ENCODE measurements at regions of chr7 and their contacts with region 1.

Region 1: GRCh38 chr7:47482013-47482875 is 99.7 kb downstream of the TNS3 start:
- DNase-seq: peak; percentile 98
- ATAC-seq: peak; percentile 69
- H3K4me3 ChIP-seq: no peak overlapping the region
- H3K27ac ChIP-seq: peak overlapping the region; percentile 84
- H3K4me1 ChIP-seq: peaks cover 55% of the 10 kb centered on the region
- H3K27me3 ChIP-seq: no peaks in the 10 kb centered on the region
- CTCF ChIP-seq: no peak
- POLR2A ChIP-seq: peak; percentile 12
- RAD21 ChIP-seq: peak; percentile 33; the same call in 1 of the 2 replicates

Region 2: DNA sequence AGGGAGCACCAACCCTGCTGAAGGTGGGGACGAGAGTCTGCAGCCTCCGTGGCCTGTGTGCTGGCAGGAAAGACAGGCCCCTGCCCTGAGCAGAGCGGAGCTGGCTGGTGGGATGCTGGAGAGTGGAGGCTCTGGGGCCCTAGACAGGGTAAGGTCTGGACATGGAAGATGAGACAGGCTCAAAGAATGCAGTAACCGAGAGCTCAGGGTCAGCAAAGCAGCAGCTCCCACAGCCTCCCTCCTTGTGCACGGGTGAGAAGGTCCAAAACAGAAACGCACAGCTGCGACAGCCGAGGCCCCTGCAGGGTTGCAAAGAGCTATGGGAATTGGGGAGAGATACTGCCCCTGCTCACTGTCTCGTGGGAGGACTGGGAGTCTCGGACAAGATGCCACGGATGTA is 19.2 kb after region 1 on chr7:
- CTCF ChIA-PET with region 1: no interaction called
- POLR2A ChIA-PET with region 1: interaction called, 3 read pairs
- dilution Hi-C with region 1: no loop called
- in situ Hi-C with region 1: no loop called
- intact Hi-C with region 1: loop called (anchors 2 kb)
- DNase-seq: peak; percentile 96
- ATAC-seq: peak; percentile 94
- H3K4me3 ChIP-seq: no peak overlapping the region
- H3K27ac ChIP-seq: peak overlapping the region; percentile 96
- H3K4me1 ChIP-seq: peaks cover 49% of the 10 kb centered on the region
- H3K27me3 ChIP-seq: no peaks in the 10 kb centered on the region
- CTCF ChIP-seq: no peak
- POLR2A ChIP-seq: peak; percentile 40
- RAD21 ChIP-seq: no peak; the same call in 1 of the 2 replicates

Region 3: DNA sequence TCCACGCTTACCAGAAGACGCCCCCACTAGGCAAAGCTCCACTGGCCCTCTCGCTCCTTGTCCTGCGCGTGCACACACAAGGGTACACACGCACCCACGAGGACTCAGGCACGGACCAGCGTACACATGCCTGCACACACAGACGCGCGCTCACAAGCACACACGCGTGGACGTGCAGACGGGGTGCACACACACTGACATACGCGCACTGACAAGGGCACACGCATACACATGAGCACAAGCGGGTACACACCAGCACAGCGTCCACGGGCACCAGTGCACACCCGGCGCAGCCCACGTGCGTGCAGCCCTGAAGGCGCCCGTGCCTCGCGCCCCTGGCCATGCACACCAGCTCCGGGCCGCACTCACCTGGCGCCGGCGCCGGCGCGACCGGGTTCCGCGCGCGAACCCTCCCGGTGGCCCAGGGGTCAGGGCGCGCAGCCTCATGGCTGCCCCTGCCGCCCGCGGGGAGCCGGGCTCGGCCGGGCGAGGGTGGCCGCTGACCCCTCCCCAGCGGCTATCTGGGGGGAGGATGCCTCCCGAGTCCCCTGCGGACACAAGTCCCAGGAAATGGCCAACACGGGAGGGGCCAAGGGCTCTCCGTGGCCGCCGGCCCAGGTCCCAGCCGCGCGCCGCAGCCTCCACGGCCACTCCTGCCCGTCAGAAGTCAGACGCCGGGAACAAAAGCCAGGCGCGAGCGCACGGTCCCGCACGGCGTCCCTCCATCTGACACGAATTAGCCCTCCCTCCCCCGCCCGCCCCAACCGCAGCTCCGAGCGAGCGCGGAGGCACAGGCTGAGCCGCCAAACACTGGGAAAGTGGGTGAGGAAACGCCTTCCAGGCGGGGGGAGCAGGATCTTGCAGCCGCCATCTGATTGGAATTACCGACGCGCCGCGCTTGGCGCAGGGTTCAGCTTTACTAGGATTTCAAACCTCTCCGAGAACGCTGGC is 54.7 kb after region 1 on chr7:
- CTCF ChIA-PET with region 1: no interaction called
- POLR2A ChIA-PET with region 1: no interaction called
- dilution Hi-C with region 1: no loop called
- in situ Hi-C with region 1: no loop called
- intact Hi-C with region 1: loop called (anchors 1 kb)
- DNase-seq: peak; percentile 76
- ATAC-seq: peak; percentile 46
- H3K4me3 ChIP-seq: peak overlapping the region; percentile 11
- H3K27ac ChIP-seq: peak overlapping the region; percentile 15; the same call in 1 of the 2 replicates
- H3K4me1 ChIP-seq: peaks cover 39% of the 10 kb centered on the region
- H3K27me3 ChIP-seq: no peaks in the 10 kb centered on the region
- CTCF ChIP-seq: no peak
- POLR2A ChIP-seq: no peak
- RAD21 ChIP-seq: no peak

Region 4: DNA sequence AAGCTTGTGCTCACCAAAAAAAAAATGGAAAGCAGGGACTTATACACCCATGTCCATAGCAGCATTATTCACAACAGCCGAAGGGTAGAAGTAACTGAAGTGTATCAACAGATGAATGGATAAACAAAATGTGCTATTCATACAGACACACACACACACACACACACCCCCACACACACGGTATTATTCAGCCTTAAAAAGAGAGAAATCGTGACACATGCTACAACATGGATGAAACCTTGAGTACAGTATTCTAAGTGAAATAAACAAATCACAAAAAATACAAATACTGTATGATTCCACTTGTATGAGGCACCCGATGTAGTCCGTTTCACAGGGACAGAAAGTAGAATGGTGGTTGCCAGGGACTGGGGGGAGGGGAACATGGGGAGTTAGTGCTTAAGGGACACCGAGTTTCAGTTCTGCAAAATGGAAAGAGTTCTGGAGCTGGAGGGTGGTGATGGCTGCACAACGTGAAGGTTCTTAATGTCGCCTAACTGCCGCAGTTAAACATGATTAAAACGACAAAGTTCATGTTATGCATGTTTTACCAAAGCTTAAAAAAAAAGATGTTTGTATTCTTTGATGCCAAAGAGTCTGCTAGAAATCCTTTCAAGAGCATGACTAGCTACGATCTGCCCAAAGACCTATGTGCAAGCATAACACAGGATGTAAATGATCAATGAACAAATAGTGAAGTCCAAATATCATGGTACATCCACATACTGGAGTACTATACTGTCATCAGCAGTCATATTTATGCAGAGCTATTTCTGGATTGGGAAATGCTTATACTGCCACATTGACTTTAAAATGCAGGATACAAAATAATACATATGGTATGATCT is 92.5 kb after region 1 on chr7:
- CTCF ChIA-PET with region 1: no interaction called
- POLR2A ChIA-PET with region 1: no interaction called
- dilution Hi-C with region 1: no loop called
- in situ Hi-C with region 1: no loop called
- intact Hi-C with region 1: no loop called
- DNase-seq: peak; percentile 84
- ATAC-seq: peak; percentile 4
- H3K4me3 ChIP-seq: no peak overlapping the region
- H3K27ac ChIP-seq: peak overlapping the region; percentile 53; the same call in 1 of the 2 replicates
- H3K4me1 ChIP-seq: peaks cover 60% of the 10 kb centered on the region
- H3K27me3 ChIP-seq: no peaks in the 10 kb centered on the region
- CTCF ChIP-seq: no peak
- POLR2A ChIP-seq: no peak; the same call in 1 of the 2 replicates
- RAD21 ChIP-seq: no peak